ENCODE measurements at regions of chrX and their contacts with region 1.

Region 1: GRCh38 chrX:45758319-45758718 is 557.6 kb upstream of the DIPK2B start:
- DNase-seq: peak; percentile 73
- H3K4me3 Mint-ChIP-seq: peak overlapping the region; percentile 77
- H3K27ac Mint-ChIP-seq: peak overlapping the region; percentile 92
- H3K4me1 Mint-ChIP-seq: peaks cover 72% of the 10 kb centered on the region
- H3K27me3 Mint-ChIP-seq: no peaks in the 10 kb centered on the region

Region 2: GRCh38 chrX:45322382-45322781 is 435.9 kb before region 1 on chrX:
- CTCF ChIA-PET with region 1: no interaction called
- POLR2A ChIA-PET with region 1: no interaction called
- intact Hi-C with region 1: loop called (anchors 10 kb)
- DNase-seq: peak; percentile 8
- H3K4me3 Mint-ChIP-seq: no peak overlapping the region
- H3K27ac Mint-ChIP-seq: no peak overlapping the region
- H3K4me1 Mint-ChIP-seq: peaks cover 2% of the 10 kb centered on the region
- H3K27me3 Mint-ChIP-seq: peaks cover 3% of the 10 kb centered on the region

Region 3: DNA sequence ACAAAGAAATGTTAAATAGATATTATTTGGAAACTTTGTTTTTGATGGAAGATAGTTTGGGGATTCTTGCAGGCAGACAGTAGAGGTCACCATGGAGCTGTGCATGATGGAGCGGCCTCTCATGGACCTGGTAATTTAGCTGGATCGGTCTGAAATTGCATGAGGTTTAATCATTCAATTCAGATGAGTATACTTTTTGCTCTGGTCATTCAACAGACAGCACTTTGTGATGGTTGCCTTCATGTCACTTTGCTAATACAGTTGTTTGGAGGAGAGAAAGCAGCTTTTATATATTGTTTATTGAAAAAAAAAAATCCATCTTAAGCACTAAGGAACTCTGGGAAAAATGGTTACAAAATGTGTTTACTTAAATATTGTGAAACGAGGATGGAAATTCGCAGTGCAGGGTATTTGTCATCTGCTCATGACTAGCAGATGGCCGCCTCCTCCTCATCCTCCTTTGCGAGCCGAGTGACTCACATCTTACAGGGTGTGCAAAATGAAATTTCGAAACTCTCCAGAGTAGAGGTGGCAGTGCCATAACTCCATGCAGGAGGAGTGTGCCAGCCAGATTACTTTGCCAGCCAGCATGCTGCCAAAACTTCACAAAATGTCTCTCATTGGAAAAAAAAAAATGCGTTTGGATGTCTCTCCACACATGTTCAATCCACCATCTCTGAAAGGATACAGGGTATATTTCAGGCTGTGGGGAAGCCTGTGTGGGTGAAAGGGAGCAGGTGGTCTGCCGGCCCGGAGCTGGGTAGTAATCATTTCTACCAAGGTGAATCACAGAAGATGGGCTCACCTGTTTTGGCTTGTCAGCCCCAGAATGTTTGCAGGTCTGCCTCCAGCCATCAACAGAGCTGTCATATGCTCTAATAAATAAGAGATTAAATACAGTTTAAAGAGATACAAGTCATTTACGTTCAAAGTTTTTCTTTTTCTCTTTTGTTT is 242.8 kb before region 1 on chrX:
- CTCF ChIA-PET with region 1: no interaction called
- POLR2A ChIA-PET with region 1: interaction called, 3 read pairs
- intact Hi-C with region 1: loop called (anchors 5 kb)
- DNase-seq: peak; percentile 53
- H3K4me3 Mint-ChIP-seq: no peak overlapping the region
- H3K27ac Mint-ChIP-seq: peak overlapping the region; percentile 49
- H3K4me1 Mint-ChIP-seq: peaks cover 17% of the 10 kb centered on the region
- H3K27me3 Mint-ChIP-seq: peaks cover 3% of the 10 kb centered on the region

Region 4: GRCh38 chrX:45621376-45622041 is 136.8 kb before region 1 on chrX:
- CTCF ChIA-PET with region 1: no interaction called
- POLR2A ChIA-PET with region 1: interaction called, 12 read pairs
- intact Hi-C with region 1: loop called (anchors 2 kb)
- DNase-seq: peak; percentile 31
- H3K4me3 Mint-ChIP-seq: no peak overlapping the region
- H3K27ac Mint-ChIP-seq: peak overlapping the region; percentile 83
- H3K4me1 Mint-ChIP-seq: peaks cover 23% of the 10 kb centered on the region
- H3K27me3 Mint-ChIP-seq: peaks cover 2% of the 10 kb centered on the region

Region 5: GRCh38 chrX:45769761-45770582 is 11.7 kb after region 1 on chrX:
- CTCF ChIA-PET with region 1: interaction called, 3 read pairs
- POLR2A ChIA-PET with region 1: interaction called, 40 read pairs
- intact Hi-C with region 1: loop called (anchors 1 kb)
- DNase-seq: peak; percentile 63
- H3K4me3 Mint-ChIP-seq: peak overlapping the region; percentile 84
- H3K27ac Mint-ChIP-seq: peak overlapping the region; percentile 95
- H3K4me1 Mint-ChIP-seq: peaks cover 54% of the 10 kb centered on the region
- H3K27me3 Mint-ChIP-seq: no peaks in the 10 kb centered on the region

Region 6: GRCh38 chrX:45806410-45807121 is 48.2 kb after region 1 on chrX:
- CTCF ChIA-PET with region 1: interaction called, 7 read pairs
- POLR2A ChIA-PET with region 1: interaction called, 13 read pairs
- intact Hi-C with region 1: loop called (anchors 1 kb)
- DNase-seq: peak; percentile 68
- H3K4me3 Mint-ChIP-seq: peak overlapping the region; percentile 64
- H3K27ac Mint-ChIP-seq: peak overlapping the region; percentile 95
- H3K4me1 Mint-ChIP-seq: peaks cover 85% of the 10 kb centered on the region
- H3K27me3 Mint-ChIP-seq: no peaks in the 10 kb centered on the region

Measured in activated CD4-positive, alpha-beta memory T cell treated with anti-CD3 and anti-CD28 coated beads for 36 hours (primary cell).